ENCODE measurements at regions of chr12 and their contacts with region 1.

Region 1: DNA sequence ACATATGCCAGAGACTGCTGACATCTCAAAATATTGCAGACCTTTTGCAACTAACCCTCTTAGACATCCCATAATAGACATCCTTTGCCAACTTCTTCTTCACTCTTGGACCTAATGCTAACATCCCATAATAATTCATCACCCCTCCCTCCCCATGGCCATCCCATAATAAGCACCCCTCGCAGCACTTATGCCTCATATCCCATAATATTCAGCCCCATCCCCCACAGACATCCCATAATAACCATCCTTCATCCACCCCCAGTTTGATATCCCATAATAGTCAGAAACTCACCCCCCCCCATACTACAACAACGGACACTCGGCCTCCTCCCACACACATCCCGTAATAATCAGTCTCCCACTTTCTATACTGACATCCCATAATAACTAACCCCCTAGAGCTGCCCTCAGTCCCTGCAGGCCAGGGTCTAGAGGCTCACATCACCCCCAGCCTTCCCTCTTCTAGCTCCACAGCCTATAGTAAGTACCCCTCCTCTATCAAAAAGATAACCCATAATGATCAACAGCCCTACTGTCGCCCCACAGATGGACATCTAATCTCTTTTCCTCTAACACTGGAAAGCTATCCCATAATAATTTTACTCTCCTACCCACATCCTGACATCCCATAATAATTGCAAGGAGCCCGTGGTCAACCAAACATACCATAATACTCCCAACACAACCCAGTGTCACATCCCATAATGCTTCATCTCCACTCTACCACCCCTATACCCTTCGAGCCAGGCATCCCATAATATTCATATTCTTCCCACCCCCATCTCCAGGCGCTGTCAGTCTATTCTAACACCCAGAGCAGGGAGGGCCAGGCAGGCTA is 792 bp upstream of the CHD4 start:
- DNase-seq: no peak

Region 2: DNA sequence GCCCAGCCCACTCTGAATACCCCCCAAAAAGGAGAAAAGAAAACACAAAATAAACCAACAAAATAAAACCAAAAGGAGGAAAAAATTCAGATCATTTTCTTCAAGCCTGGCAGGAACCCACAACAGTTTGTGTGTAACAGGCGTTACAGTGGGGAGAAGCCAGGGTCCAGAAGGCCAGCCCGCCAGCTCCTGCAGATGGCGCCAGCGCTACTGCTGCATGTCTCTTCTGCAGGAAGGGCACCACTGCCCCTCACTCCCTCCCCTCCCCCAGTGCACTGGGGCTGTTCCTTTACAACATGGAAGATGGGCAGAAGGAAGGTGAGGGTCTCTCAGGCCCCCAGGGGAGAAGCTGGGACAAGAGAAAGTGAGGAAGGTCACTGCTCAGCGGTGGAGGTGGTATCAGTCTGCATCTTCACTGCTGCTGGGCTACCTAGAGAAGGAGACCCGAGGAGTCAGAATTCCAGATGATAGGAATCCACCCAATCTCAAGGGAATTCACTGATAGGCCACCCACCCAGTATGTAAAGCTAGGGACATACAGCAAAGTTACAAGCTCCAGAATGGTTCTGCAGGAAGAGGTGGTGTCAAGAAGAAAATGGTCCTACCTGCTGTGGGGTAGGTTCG is 37.6 kb before region 1 on chr12:
- intact Hi-C with region 1: loop called (anchors 5 kb)
- DNase-seq: no peak

Region 3: GRCh38 chr12:6662906-6663742 is 55.2 kb after region 1 on chr12 and contains the start of gene ING4:
- intact Hi-C with region 1: no loop called
- DNase-seq: peak; percentile 99
- total RNA-seq, gene ING4: 20.6 TPM

Region 4: GRCh38 chr12:6735448-6736191 is 127.6 kb after region 1 on chr12:
- intact Hi-C with region 1: no loop called
- DNase-seq: peak; percentile 83